ENCODE measurements at regions of chr14 and their contacts with region 1.

Region 1: GRCh38 chr14:90758028-90758889 is 58.0 kb downstream of the TTC7B start:
- DNase-seq: peak; percentile 82 to 99 (median 94)
- ATAC-seq: peak; percentile 83
- H3K4me3 ChIP-seq: peak overlapping the region; percentile 66
- H3K4me3 Mint-ChIP-seq: peak overlapping the region; percentile 91
- H3K27ac ChIP-seq: peak overlapping the region; percentile 63 to 84
- H3K27ac Mint-ChIP-seq: peak overlapping the region; percentile 89
- H3K4me1 ChIP-seq: peaks cover 21% of the 10 kb centered on the region
- H3K4me1 Mint-ChIP-seq: peaks cover 23% of the 10 kb centered on the region
- H3K27me3 ChIP-seq: no peaks in the 10 kb centered on the region
- H3K27me3 Mint-ChIP-seq: no peaks in the 10 kb centered on the region
- CTCF ChIP-seq: peak; percentile 88

Region 2: DNA sequence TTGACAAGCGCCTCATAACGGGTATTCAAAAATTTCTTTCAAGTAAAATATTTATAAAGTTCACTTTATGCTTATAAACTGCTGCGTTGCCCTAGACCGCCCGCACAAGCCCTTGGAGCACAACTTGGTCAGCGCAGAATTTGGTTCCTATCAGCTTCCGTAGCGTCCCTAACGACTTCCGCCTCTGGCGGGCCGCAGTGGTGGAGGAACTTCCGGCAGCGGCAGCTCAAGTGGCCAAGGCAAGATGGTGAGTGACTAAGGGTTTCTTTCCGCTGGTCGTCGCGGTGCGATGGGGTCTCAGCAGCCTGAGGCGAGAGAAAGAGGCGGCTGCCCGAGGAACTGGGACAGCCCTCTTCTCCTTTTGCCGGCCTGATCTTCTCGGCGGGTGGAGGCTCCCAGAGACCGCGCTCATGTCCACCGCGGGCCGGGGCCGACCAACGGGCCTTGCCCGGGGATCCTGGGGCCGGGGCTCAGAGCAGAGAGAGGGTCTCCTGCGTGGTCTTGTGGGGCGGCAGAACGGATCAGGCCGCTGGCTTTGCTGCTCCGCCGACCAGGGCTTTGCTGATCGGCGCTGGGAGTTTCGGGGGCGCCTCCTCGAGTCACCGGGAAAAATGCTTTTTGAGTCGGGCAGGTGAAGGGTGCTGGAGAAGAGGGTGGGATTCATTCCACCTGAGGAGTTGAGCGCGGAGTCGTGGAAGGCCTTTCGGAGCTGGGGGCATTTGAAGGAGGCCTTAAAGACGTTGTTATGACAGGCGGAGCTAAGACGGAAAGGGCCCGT is 501.7 kb before region 1 on chr14 and contains the start of gene PSMC1:
- CTCF ChIA-PET with region 1: no interaction called
- POLR2A ChIA-PET with region 1: interaction called, 11 read pairs
- intact Hi-C with region 1: no loop called
- DNase-seq: peak; percentile 79 to 93 (median 83)
- ATAC-seq: peak; percentile 94
- H3K4me3 ChIP-seq: peak within 1 kb of the TSS; percentile 79
- H3K4me3 Mint-ChIP-seq: peak within 1 kb of the TSS; percentile 99
- H3K27ac ChIP-seq: peak within 1 kb of the TSS; percentile 39 to 79
- H3K27ac Mint-ChIP-seq: peak within 1 kb of the TSS; percentile 91
- H3K4me1 ChIP-seq: peaks cover 12% of the 10 kb centered on the region
- H3K4me1 Mint-ChIP-seq: peaks cover 34% of the 10 kb centered on the region
- H3K27me3 ChIP-seq: peaks cover 0 to 4% of the 10 kb centered on the region in 2 experiments
- H3K27me3 Mint-ChIP-seq: peaks cover 16% of the 10 kb centered on the region
- CTCF ChIP-seq: no peak
- total RNA-seq, gene PSMC1: 75.8 to 80.3 TPM

Region 3: GRCh38 chr14:90368946-90369721 is 389.1 kb before region 1 on chr14:
- CTCF ChIA-PET with region 1: interaction called, 5 read pairs
- POLR2A ChIA-PET with region 1: interaction called, 11 read pairs
- intact Hi-C with region 1: loop called (anchors 1 to 2 kb)
- DNase-seq: peak in 3 of 14 experiments; percentile 63 to 71 (median 66)
- ATAC-seq: peak; percentile 100
- H3K4me3 ChIP-seq: no peak overlapping the region
- H3K4me3 Mint-ChIP-seq: no peak overlapping the region
- H3K27ac ChIP-seq: no peak overlapping the region
- H3K27ac Mint-ChIP-seq: no peak overlapping the region
- H3K4me1 ChIP-seq: no peaks in the 10 kb centered on the region
- H3K4me1 Mint-ChIP-seq: peaks cover 5% of the 10 kb centered on the region
- H3K27me3 ChIP-seq: no peaks in the 10 kb centered on the region
- H3K27me3 Mint-ChIP-seq: no peaks in the 10 kb centered on the region
- CTCF ChIP-seq: peak; percentile 74

Region 4: GRCh38 chr14:90399541-90400444 is 358.5 kb before region 1 on chr14:
- CTCF ChIA-PET with region 1: interaction called, 12 read pairs
- POLR2A ChIA-PET with region 1: interaction called, 12 read pairs
- intact Hi-C with region 1: loop called in 1 of 2 experiments (anchors 5 kb)
- DNase-seq: peak; percentile 72 to 94 (median 80)
- ATAC-seq: peak; percentile 48
- H3K4me3 ChIP-seq: peak overlapping the region; percentile 62
- H3K4me3 Mint-ChIP-seq: peak overlapping the region; percentile 100
- H3K27ac ChIP-seq: peak overlapping the region; percentile 86 to 88
- H3K27ac Mint-ChIP-seq: peak overlapping the region; percentile 100
- H3K4me1 ChIP-seq: peaks cover 52% of the 10 kb centered on the region
- H3K4me1 Mint-ChIP-seq: peaks cover 73% of the 10 kb centered on the region
- H3K27me3 ChIP-seq: no peaks in the 10 kb centered on the region
- H3K27me3 Mint-ChIP-seq: peaks cover 9% of the 10 kb centered on the region
- CTCF ChIP-seq: peak; percentile 100

Region 5: GRCh38 chr14:90798966-90799365 is 40.7 kb after region 1 on chr14:
- CTCF ChIA-PET with region 1: no interaction called
- POLR2A ChIA-PET with region 1: no interaction called
- intact Hi-C with region 1: no loop called
- DNase-seq: no peak
- ATAC-seq: no peak
- H3K4me3 ChIP-seq: no peak overlapping the region
- H3K4me3 Mint-ChIP-seq: no peak overlapping the region
- H3K27ac ChIP-seq: no peak overlapping the region
- H3K27ac Mint-ChIP-seq: no peak overlapping the region
- H3K4me1 ChIP-seq: peaks cover 7% of the 10 kb centered on the region
- H3K4me1 Mint-ChIP-seq: no peaks in the 10 kb centered on the region
- H3K27me3 ChIP-seq: no peaks in the 10 kb centered on the region
- H3K27me3 Mint-ChIP-seq: no peaks in the 10 kb centered on the region
- CTCF ChIP-seq: no peak

Region 6: DNA sequence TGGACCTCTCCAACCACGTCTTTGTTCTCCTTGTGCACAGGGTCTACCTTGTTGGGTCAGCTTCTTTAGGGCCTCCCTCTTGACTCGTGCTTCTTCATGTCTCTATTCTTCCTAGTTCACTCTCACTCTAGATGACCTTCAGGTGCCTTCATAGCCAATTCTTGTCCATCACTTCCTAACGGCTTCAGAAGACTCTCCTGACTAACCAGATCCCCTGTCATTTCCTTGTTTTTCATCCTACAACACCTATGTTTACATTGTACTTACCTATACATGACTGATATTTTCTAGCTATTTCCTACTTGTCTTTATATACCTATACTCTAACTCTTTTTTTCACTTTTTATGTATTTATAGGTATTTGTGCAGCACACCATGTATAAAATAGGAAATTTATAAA is 185.1 kb after region 1 on chr14:
- CTCF ChIA-PET with region 1: no interaction called
- POLR2A ChIA-PET with region 1: no interaction called
- intact Hi-C with region 1: no loop called
- DNase-seq: no peak
- ATAC-seq: no peak
- H3K4me3 ChIP-seq: no peak overlapping the region
- H3K4me3 Mint-ChIP-seq: no peak overlapping the region
- H3K27ac ChIP-seq: no peak overlapping the region
- H3K27ac Mint-ChIP-seq: no peak overlapping the region
- H3K4me1 ChIP-seq: no peaks in the 10 kb centered on the region
- H3K4me1 Mint-ChIP-seq: no peaks in the 10 kb centered on the region
- H3K27me3 ChIP-seq: no peaks in the 10 kb centered on the region
- H3K27me3 Mint-ChIP-seq: no peaks in the 10 kb centered on the region
- CTCF ChIP-seq: no peak

Region 7: DNA sequence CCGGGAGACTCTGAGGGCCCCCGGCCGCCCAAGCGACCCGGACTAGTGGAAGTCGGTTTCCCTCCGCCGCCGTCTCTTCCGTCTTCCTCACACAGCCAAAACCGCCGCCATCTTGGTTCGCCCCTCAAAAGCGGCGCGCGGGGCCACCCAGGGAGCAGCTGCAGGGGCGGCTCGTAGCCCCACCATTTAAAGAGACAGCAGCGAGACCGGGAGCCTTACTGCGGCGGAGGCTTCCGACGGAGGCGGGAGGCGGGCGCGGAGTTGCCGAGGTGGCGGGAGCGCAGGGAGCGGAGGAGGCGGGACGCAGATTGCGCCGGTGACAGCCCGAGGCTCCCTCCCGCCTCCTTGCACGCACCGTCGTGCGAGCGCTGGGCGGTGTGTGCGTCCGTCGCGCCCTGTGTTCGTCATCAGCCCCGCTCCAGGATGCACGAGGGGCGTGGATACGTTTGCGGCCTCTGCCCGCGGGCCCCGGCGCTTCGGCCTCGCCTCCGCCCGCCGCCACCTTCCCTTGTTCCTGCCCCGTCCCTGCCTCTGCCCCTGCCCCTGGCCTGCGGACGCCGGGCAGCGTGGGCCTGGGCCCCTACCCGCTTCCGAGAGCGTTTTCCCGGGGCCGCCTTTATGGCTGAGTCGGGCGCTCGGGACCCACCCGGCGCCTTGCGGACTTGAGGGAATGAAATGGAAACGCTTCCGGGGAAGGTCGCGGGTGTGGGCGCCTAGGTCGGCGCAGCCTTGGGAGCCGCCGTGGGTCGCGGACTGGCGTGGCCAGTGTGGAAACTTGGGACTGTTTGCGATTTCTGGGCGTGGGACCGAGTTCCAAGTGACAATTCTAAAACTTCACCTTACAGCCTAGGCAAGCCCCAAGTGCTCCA is 752.1 kb after region 1 on chr14 and contains the start of gene PPP4R3A:
- CTCF ChIA-PET with region 1: no interaction called
- POLR2A ChIA-PET with region 1: interaction called, 3 read pairs
- intact Hi-C with region 1: loop called in 1 of 2 experiments (anchors 5 kb)
- DNase-seq: peak; percentile 82 to 98 (median 90)
- ATAC-seq: peak; percentile 85
- H3K4me3 ChIP-seq: peak within 1 kb of the TSS; percentile 90
- H3K4me3 Mint-ChIP-seq: peak within 1 kb of the TSS; percentile 100
- H3K27ac ChIP-seq: peak within 1 kb of the TSS; percentile 99
- H3K27ac Mint-ChIP-seq: peak within 1 kb of the TSS; percentile 100
- H3K4me1 ChIP-seq: peaks cover 23% of the 10 kb centered on the region
- H3K4me1 Mint-ChIP-seq: peaks cover 44% of the 10 kb centered on the region
- H3K27me3 ChIP-seq: no peaks in the 10 kb centered on the region
- H3K27me3 Mint-ChIP-seq: no peaks in the 10 kb centered on the region
- CTCF ChIP-seq: no peak
- total RNA-seq, gene PPP4R3A: 189 to 205 TPM

Measured in CD4-positive, alpha-beta T cell (primary cell).